OCI-LY7 (cell line): ENCODE measurements at regions of chr19 and their contacts with region 1.

Region 1: DNA sequence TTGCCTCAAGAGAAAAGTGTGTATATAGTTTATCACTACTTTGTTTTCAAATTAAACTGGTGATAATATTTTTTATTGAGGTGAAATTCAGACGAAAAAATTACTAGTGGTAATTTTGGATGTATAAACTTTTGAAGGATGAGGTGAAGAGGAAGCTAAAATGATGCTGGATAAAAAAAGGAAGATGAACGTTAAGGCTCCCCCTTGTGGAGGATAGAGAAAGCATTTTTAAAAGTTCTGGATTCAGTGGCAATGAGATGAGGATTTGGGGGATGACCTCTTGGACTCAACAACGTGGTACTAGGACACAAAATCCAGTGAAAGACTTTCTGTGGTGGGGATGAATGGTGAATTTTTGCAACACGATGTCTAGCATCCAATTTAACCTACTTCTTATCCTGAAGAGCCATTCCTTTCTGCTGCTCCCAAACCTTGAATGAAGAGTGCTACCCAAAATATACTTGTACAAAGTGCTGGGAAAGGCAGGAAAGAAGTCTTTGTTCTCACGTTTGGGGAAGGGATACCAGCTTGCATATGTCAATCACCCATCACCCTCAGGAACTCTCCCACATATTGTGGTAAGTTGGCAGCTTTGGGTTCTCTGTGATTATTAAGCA is 7.3 kb upstream of the SIGLEC5 start:
- DNase-seq: peak; percentile 23
- H3K4me3 ChIP-seq: no peak overlapping the region
- H3K27ac ChIP-seq: no peak overlapping the region
- H3K4me1 ChIP-seq: no peaks in the 10 kb centered on the region
- CTCF ChIP-seq: peak; percentile 75

Region 2: GRCh38 chr19:51607920-51608562 is 29.4 kb before region 1 on chr19:
- CTCF ChIA-PET with region 1: no interaction called
- POLR2A ChIA-PET with region 1: no interaction called
- intact Hi-C with region 1: loop called (anchors 1 kb)
- DNase-seq: peak; percentile 81
- H3K4me3 ChIP-seq: peak overlapping the region; percentile 47
- H3K27ac ChIP-seq: peak overlapping the region; percentile 94
- H3K4me1 ChIP-seq: peaks cover 36% of the 10 kb centered on the region
- CTCF ChIP-seq: peak; percentile 92

Region 3: DNA sequence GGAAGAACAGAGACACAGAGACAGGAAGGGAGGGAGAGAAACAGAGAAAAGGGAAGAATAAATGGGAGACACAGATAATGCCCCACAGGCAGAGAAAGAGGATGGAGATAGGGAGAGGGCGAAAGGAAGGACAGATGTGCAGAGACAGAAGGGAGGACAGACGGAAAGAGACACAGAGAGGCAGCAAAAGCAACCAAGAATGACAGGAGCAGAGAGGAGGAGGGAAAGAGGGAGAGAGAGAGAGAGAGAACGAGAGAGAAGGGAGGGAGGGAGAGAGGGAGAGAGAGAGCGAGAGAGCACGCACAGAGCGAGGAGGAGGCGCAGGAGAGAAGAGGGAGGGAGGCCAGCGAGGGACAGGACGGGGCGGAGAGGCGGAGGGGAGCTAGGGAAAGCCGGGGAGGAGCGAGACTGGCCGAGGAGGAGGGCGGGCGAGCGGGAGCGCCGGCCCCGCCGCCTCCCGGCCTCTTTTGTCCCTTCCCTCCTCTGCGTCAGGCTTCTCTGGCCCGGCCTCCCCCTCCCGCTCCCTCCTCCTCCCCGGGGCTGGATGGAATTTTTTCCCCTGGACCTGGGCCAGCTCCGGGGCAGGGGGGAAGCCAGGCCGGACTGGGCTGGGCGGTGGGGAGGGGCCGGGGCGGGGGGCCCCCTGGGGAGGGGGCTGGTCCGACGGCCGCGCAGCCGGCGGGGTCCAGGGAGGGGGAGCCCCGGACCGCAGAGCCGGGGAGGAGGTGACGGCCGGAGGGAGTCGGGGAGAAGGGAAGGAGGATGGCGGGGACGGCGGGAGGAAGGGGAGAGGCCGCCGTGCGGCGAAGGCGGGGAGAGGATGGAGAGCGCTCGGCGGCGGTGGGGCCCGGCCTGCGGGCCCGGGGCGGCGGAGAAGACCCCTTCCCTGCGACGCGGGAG is 51.5 kb after region 1 on chr19:
- CTCF ChIA-PET with region 1: no interaction called
- POLR2A ChIA-PET with region 1: no interaction called
- intact Hi-C with region 1: no loop called
- DNase-seq: no peak
- H3K4me3 ChIP-seq: no peak overlapping the region
- H3K27ac ChIP-seq: no peak overlapping the region
- H3K4me1 ChIP-seq: peaks cover 15% of the 10 kb centered on the region
- CTCF ChIP-seq: no peak

Region 4: DNA sequence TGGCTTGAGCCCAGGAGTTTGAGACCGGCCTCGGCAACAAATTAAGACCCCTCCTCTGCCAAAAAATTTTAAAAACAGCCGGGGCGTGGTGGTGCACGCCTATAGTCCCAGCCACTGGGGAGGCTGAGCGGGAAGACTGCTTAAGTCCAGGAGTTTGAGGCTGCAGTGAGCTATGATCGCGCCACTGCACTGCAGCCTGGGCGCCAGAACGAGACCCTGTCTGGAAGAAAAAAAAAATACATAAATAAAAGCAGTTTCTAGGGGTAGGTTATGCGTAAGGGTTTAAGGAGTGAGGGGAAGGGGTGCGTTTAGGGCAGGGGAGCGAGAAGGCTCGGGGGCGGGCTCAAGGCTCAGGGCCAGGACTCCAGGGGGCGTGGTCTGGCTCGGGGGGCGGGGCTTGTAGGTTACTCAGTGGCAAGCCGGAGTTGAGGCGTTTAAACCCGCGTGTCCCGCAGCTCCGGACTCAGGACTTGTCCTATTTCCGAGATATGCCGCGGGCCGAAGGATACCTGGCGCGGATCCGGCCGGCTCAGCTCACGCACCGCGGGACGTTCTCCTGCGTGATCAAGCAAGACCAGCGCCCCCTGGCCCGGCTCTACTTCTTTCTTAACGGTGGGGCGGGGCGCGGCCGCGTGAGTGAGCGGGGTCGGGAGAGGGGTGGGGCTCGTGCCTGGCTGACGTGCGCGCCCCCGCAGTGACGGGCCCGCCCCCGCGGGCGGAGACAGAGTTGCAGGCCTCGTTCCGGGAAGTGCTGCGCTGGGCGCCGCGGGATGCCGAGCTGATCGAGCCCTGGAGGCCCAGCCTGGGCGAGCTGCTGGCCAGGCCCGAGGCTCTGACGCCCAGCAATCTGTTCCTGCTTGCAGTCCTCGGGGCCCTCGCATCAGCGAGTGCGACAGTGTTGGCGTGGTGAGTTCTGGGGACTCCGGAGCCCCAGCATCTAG is 66.4 kb after region 1 on chr19:
- CTCF ChIA-PET with region 1: no interaction called
- POLR2A ChIA-PET with region 1: no interaction called
- intact Hi-C with region 1: no loop called
- DNase-seq: peak; percentile 96
- H3K4me3 ChIP-seq: peak overlapping the region; percentile 95
- H3K27ac ChIP-seq: peak overlapping the region; percentile 41
- H3K4me1 ChIP-seq: peaks cover 9% of the 10 kb centered on the region
- CTCF ChIP-seq: peak; percentile 71